HepG2 (cell line): ENCODE measurements at regions of chr14 and their contacts with region 1.

Region 1: DNA sequence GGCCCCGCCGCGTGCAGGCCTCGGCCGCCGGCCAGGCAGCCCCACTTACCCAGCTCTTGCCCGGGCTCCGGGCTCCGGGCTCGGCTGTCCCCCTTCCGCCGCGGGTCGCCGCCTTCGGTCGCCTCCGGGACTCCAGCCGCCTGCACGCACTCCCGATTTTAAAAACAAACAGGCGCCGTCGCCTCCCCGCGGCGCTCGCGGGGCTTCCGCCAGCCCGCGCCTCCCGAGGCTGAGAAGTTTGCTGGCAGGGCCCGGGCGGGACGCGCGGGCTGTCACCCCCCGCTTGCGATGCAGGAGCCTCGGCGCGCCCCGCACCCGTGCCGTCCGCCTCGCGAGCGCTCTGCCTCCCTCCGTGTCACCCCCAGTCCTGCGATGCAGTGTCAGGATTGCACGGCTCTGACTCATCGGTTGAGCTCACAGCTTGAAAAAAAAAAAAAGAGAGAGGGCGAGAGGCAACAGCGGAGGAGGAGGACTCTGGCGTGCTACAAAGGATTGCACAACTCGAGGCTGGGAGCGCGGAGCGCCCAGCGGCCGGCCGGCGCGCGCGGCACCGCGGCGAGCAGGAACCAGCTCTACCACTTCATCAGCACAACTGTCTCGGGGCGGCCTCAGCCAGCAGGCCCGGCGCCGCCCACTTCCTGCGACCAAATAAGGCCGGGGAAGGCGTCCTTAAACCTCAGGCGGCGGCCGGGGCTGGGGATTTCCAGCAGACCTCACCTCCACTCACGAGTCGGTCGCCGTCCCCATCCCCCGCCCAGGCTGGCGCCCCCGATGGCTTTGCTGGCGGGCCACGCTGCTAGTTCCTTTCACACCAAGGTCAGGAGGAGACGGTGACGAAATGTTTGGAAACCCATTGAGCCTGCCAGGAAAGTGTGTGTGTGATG is 45.8 kb upstream of the PNMA1 start:
- DNase-seq: peak; percentile 96
- ATAC-seq: peak; percentile 86
- H3K4me3 ChIP-seq: peak overlapping the region; percentile 59 to 83 (median 79); a peak in 5 of 6 replicates
- H3K27ac ChIP-seq: peak overlapping the region; percentile 95
- H3K4me1 ChIP-seq: peaks cover 86% of the 10 kb centered on the region
- H3K27me3 ChIP-seq: no peaks in the 10 kb centered on the region
- CTCF ChIP-seq: peak; percentile 21
- EP300 ChIP-seq: peak; percentile 6 to 57
- POLR2A ChIP-seq: peak; percentile 70 to 77; a peak in 3 of 4 replicates
- RAD21 ChIP-seq: peak; percentile 35; the same call in 1 of the 2 replicates

Region 2: GRCh38 chr14:73553845-73554244 is 206.1 kb before region 1 on chr14:
- CTCF ChIA-PET with region 1: no interaction called
- POLR2A ChIA-PET with region 1: no interaction called
- in situ Hi-C with region 1: no loop called
- intact Hi-C with region 1: no loop called
- DNase-seq: no peak
- ATAC-seq: no peak
- H3K4me3 ChIP-seq: no peak overlapping the region
- H3K27ac ChIP-seq: no peak overlapping the region
- H3K4me1 ChIP-seq: peaks cover 13% of the 10 kb centered on the region
- H3K27me3 ChIP-seq: no peaks in the 10 kb centered on the region
- CTCF ChIP-seq: no peak
- EP300 ChIP-seq: no peak
- POLR2A ChIP-seq: no peak
- RAD21 ChIP-seq: no peak

Region 3: DNA sequence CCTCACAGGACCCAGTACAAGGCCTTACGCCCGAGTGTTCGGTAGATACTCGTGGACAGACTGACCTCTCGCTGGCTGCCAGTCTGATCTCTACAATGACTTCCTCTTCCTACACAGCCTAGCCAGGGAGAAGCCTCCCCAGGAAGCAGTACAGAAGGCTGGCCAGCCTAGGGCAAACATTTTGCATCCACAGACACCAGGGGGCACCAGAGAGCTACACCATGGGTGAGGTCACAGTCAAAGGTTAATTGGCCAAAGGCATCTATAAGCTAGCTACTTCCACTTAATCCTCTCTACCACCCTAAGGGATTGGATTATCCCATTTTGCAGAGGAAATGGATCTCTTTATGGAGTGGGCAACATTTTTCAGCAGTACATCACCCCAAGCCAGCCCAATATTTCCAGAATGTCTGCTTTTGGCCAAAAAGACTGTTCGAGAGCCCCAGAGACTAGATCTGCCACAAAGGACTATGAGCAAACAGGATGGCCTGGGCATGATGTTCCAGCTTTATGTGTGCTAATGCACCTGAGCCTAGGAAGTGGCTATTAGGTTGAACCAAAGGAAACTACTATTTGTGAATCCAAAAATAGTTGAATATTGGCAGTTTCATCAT is 31.1 kb before region 1 on chr14:
- CTCF ChIA-PET with region 1: interaction called, 8 read pairs
- POLR2A ChIA-PET with region 1: no interaction called
- in situ Hi-C with region 1: no loop called
- intact Hi-C with region 1: loop called (anchors 1 kb)
- DNase-seq: peak; percentile 60
- ATAC-seq: peak; percentile 86
- H3K4me3 ChIP-seq: no peak overlapping the region
- H3K27ac ChIP-seq: no peak overlapping the region
- H3K4me1 ChIP-seq: peaks cover 19% of the 10 kb centered on the region
- H3K27me3 ChIP-seq: no peaks in the 10 kb centered on the region
- CTCF ChIP-seq: peak; percentile 95
- EP300 ChIP-seq: no peak
- POLR2A ChIP-seq: no peak
- RAD21 ChIP-seq: peak; percentile 92

Region 4: DNA sequence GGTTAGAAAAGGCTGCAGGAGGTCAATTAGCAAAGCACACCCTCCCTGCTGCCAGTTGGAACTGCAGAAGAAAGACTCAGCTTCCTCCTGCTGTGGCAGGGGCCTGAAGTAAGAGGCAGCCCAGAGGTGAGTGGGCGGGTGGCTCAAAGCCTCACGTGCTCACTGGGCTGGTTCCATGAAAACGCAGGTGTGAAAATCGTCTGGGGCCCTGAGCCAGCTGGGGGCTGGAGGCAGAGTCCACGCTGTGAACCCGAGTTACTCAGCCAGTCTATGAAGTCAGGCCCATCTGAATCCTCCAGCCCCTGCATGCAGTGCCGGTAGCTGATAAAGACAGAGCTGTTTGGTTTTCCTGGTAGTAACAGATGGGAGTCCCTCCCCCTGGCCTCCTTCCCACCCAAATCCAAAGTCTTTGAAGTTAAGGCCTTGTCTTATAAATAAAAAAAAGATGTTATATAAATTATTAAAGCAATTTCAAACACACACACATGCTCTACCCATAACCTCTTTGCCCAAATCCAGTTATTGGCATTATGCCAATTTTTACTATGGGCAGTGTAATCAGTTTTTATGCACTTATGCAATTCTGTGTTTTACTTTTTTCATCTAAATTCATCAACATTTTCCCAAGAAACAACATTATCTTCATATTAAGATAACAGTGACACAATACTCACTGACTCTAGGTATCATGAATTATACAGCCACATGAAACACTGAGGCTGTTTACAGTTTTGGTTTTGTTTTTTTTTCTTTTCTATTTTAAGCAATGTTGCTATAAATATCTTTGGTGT is 12.1 kb after region 1 on chr14:
- CTCF ChIA-PET with region 1: interaction called, 4 read pairs
- POLR2A ChIA-PET with region 1: interaction called, 57 read pairs
- in situ Hi-C with region 1: no loop called
- intact Hi-C with region 1: loop called (anchors 1 kb)
- DNase-seq: peak; percentile 94
- ATAC-seq: peak; percentile 95
- H3K4me3 ChIP-seq: peak overlapping the region in 1 of 3 experiments; percentile 27; a peak in 1 of 6 replicates
- H3K27ac ChIP-seq: peak overlapping the region; percentile 53
- H3K4me1 ChIP-seq: peaks cover 79% of the 10 kb centered on the region
- H3K27me3 ChIP-seq: no peaks in the 10 kb centered on the region
- CTCF ChIP-seq: peak; percentile 29
- EP300 ChIP-seq: peak in 1 of 2 experiments; percentile 69; a peak in 2 of 4 replicates
- POLR2A ChIP-seq: peak in 1 of 2 experiments; percentile 49; a peak in 1 of 4 replicates
- RAD21 ChIP-seq: peak; percentile 71

Region 5: GRCh38 chr14:73795972-73796371 is 36.0 kb after region 1 on chr14:
- CTCF ChIA-PET with region 1: no interaction called
- POLR2A ChIA-PET with region 1: interaction called, 37 read pairs
- in situ Hi-C with region 1: no loop called
- intact Hi-C with region 1: no loop called
- DNase-seq: peak; percentile 93
- ATAC-seq: peak; percentile 84
- H3K4me3 ChIP-seq: no peak overlapping the region
- H3K27ac ChIP-seq: no peak overlapping the region
- H3K4me1 ChIP-seq: peaks cover 67% of the 10 kb centered on the region
- H3K27me3 ChIP-seq: no peaks in the 10 kb centered on the region; a peak in 1 of 5 replicates
- CTCF ChIP-seq: no peak
- EP300 ChIP-seq: peak in 1 of 2 experiments; percentile 79; a peak in 2 of 4 replicates
- POLR2A ChIP-seq: no peak
- RAD21 ChIP-seq: no peak

Region 6: DNA sequence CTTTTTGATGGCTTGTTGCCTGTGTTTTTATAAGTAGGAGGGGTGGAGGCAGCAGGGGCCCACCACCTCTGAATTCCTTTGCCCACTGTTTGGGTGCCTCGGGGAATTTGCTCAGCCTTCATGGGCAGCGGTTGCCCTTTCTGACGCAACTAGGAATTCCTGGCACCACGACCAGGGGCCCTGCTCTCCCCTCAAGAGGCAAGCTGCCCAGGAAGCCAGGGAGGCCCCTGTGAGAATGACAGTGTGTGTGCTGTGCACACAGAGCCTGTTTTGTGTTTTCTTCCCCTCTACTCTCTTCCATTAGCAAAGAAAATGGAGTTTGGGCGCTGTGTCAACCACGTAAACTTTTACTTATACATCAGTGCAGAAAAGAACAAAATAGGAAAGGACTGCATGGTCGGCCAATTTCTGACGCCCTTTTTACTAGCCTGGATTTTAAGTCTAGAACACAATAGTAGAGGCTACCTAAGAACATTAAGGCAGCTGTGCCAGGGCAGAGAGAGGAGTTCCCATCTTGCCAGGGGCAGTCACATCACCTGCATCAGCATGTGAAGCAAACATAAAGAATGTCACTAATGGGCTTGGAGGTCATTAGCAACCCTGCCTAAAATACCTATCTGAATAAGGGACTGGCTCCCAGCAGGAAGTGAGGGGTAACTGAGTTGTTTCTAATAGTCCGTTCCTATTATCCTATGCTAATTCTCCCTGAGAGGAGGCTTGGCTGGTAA is 73.7 kb after region 1 on chr14:
- CTCF ChIA-PET with region 1: no interaction called
- POLR2A ChIA-PET with region 1: interaction called, 7 read pairs
- in situ Hi-C with region 1: loop called (anchors 10 kb)
- intact Hi-C with region 1: loop called (anchors 1 kb)
- DNase-seq: peak; percentile 60
- ATAC-seq: peak; percentile 53
- H3K4me3 ChIP-seq: peak overlapping the region in 2 of 3 experiments; percentile 14 to 25; a peak in 4 of 6 replicates
- H3K27ac ChIP-seq: no peak overlapping the region
- H3K4me1 ChIP-seq: peaks cover 69% of the 10 kb centered on the region
- H3K27me3 ChIP-seq: peaks cover 0 to 2% of the 10 kb centered on the region in 2 experiments; a peak in 2 of 5 replicates
- CTCF ChIP-seq: no peak
- EP300 ChIP-seq: peak in 1 of 2 experiments; percentile 31; a peak in 1 of 4 replicates
- POLR2A ChIP-seq: no peak
- RAD21 ChIP-seq: no peak

Region 7: DNA sequence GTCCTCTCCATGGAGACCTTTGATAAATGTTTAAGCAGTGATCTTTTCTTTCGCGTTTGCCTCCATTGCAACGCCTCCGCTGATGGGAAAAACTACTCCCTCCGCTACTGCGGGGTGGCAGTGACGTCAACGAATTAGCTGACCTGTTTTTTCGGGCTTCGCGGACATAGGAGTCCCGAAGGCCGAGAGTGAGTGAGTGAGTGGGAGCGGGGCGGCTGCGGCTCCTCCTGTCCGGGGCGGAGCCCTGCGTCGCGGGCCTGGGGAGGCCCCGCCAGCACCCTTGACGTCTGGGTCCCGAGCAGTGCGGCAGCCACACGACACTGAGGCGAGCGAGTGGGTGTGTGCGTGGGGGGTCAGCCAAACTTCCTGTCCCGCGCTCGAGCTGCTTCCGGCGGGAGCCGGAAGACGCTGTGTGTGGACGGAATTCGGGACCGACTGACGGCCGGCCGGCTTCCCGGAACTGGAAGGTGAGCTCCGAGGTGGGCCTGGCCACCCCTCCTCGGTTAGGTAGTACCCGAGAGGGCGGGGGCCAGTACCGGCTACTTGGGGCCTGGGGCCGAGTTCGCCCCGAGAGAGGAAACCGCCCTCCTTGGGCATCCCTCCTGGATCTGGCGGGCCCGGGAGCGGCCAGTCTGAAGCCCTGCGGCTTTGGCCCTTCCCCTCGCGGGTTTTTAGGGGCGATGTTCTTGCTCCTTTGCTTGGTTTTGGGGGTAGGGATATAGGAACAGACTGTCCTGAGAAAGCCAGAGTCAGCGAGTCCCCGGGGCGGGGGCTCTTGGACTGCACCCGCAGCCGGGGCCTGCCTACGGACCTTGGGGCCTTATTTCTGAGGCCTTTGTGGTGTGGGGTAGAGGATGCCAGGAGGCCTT is 126.7 kb after region 1 on chr14 and contains the start of gene ZNF410:
- CTCF ChIA-PET with region 1: no interaction called
- POLR2A ChIA-PET with region 1: interaction called, 4 read pairs
- in situ Hi-C with region 1: no loop called
- intact Hi-C with region 1: loop called (anchors 1 kb)
- DNase-seq: peak; percentile 90
- ATAC-seq: peak; percentile 98
- H3K4me3 ChIP-seq: peak within 1 kb of the TSS; percentile 65 to 99 (median 90)
- H3K27ac ChIP-seq: peak within 1 kb of the TSS; percentile 88
- H3K4me1 ChIP-seq: peaks cover 35% of the 10 kb centered on the region
- H3K27me3 ChIP-seq: no peaks in the 10 kb centered on the region
- CTCF ChIP-seq: peak; percentile 27; the same call in 1 of the 2 replicates
- EP300 ChIP-seq: no peak
- POLR2A ChIP-seq: peak; percentile 63 to 91
- RAD21 ChIP-seq: peak; percentile 13; the same call in 1 of the 2 replicates
- total RNA-seq, gene ZNF410: 44.3 and 55.2 TPM in 2 replicates

Region 8: DNA sequence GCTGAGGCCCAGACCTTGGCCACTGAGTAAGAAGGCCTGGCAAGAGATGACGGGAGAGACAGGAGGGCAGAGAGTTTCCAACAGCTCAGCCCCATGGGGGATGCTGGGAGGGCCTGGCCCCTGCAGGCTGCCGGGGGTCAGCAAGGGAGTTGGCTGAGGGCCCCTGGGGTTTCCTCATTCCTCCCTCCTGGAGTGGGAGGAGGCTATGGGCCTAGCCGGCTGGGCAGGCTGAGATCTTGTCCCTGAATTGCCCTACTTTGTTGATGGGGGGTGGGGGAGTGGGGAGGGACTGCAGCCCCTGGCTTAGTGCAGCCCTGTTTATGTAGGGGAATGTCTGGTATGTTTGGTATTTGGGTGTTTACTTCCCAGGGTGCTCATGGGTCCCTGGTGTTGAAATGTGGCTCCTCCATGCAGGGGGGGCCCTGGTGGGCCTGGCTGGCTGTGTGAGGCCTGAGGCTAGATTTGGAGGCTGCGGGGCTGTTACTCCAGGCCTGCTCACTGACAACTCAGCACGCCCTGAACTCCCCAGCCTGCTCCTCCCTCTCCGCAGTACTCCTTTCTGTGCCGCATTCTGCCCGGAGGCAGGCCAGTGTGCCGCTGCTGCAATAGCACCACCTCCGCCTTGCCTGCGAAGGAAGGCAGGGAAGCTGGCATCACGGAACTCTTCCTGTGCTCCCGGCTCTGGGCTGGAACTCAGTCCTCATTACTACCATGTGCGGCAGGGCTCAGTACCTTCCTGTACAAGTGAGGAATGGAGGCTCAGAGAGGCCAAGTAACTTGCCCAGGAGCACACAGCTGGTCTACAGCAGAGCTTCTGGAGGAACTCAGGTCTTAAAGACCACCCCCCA is 1693.2 kb after region 1 on chr14:
- CTCF ChIA-PET with region 1: no interaction called
- POLR2A ChIA-PET with region 1: no interaction called
- in situ Hi-C with region 1: no loop called
- intact Hi-C with region 1: no loop called
- DNase-seq: peak; percentile 86
- ATAC-seq: peak; percentile 87
- H3K4me3 ChIP-seq: no peak overlapping the region
- H3K27ac ChIP-seq: peak overlapping the region; percentile 64
- H3K4me1 ChIP-seq: peaks cover 46% of the 10 kb centered on the region
- H3K27me3 ChIP-seq: no peaks in the 10 kb centered on the region
- CTCF ChIP-seq: no peak
- EP300 ChIP-seq: peak in 1 of 2 experiments; percentile 45; a peak in 2 of 4 replicates
- POLR2A ChIP-seq: no peak
- RAD21 ChIP-seq: no peak